Aorta (tissue), 5 donors: ENCODE measurements at regions of chr12 and their contacts with region 1.

Region 1: DNA sequence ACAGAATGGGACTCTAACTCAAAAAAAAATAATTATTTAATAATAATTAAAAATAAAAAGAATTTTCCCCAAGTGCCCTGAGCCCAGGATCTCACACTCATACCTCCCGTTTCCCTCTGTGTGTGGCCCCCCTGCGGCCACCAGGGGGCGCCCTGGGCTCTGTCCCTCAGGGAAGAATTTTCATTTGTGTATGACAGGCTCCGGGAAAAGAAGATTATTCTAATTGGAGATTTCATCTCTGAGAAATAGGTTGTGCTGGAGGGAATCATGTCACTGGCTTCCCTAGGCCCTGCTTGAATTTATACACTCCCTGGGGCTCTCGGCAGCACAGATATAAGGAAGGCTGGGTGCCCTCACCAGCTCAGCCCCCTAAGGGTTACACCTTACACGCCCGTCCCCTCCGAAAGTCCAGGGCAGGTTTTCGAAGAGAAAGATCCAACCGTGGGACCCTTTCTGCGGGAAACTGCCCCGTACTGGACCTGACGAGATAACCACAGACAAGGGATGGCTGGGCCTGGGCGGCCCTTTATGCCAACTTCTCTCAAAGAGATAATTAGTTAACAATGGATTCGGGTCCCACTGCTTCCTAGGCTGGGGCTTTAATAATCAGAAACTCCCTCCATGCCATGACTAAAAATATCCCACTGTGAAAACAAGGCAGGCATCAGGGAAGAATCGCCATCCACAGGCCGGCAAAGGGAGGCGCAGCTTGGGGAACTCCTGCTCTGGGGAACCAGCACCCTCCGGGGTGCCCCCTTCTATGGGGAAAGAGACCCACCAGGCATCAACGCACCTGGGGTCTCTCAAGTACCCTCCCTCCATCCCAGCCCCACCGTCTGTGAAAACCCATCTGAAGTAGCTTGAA is 80.7 kb downstream of the KDM2B start:
- DNase-seq: peak; percentile 84 to 94
- ATAC-seq: peak; percentile 90
- H3K4me3 ChIP-seq: peak overlapping the region in 1 of 2 donors; percentile 21
- H3K27ac ChIP-seq: peak overlapping the region in 1 of 2 donors; percentile 58
- H3K4me1 ChIP-seq: no peaks in the 10 kb centered on the region
- H3K27me3 ChIP-seq: no peaks in the 10 kb centered on the region

Region 2: GRCh38 chr12:121376754-121377697 is 123.1 kb before region 1 on chr12:
- intact Hi-C with region 1: no loop called
- DNase-seq: no peak
- ATAC-seq: no peak
- H3K4me3 ChIP-seq: no peak overlapping the region
- H3K27ac ChIP-seq: no peak overlapping the region
- H3K4me1 ChIP-seq: no peaks in the 10 kb centered on the region
- H3K27me3 ChIP-seq: no peaks in the 10 kb centered on the region

Region 3: GRCh38 chr12:121467115-121467793 is 32.9 kb before region 1 on chr12:
- intact Hi-C with region 1: no loop called
- DNase-seq: peak; percentile 95 to 97
- ATAC-seq: peak; percentile 94
- H3K4me3 ChIP-seq: peak overlapping the region; percentile 77 to 84
- H3K27ac ChIP-seq: peak overlapping the region; percentile 23 to 58
- H3K4me1 ChIP-seq: no peaks in the 10 kb centered on the region
- H3K27me3 ChIP-seq: no peaks in the 10 kb centered on the region

Region 4: GRCh38 chr12:121560392-121561008 is 60.3 kb after region 1 on chr12:
- intact Hi-C with region 1: no loop called
- DNase-seq: peak in 1 of 2 donors; percentile 56
- ATAC-seq: no peak
- H3K4me3 ChIP-seq: no peak overlapping the region
- H3K27ac ChIP-seq: no peak overlapping the region
- H3K4me1 ChIP-seq: no peaks in the 10 kb centered on the region
- H3K27me3 ChIP-seq: no peaks in the 10 kb centered on the region

Region 5: GRCh38 chr12:121579981-121580868 is 80.1 kb after region 1 on chr12:
- intact Hi-C with region 1: loop called in 1 of 2 experiments (anchors 5 kb)
- DNase-seq: peak; percentile 87 to 90
- ATAC-seq: peak; percentile 69
- H3K4me3 ChIP-seq: peak overlapping the region; percentile 89 to 95
- H3K27ac ChIP-seq: peak overlapping the region in 1 of 2 donors; percentile 80
- H3K4me1 ChIP-seq: peaks cover 0 to 6% of the 10 kb centered on the region in 2 donors
- H3K27me3 ChIP-seq: no peaks in the 10 kb centered on the region

Region 6: DNA sequence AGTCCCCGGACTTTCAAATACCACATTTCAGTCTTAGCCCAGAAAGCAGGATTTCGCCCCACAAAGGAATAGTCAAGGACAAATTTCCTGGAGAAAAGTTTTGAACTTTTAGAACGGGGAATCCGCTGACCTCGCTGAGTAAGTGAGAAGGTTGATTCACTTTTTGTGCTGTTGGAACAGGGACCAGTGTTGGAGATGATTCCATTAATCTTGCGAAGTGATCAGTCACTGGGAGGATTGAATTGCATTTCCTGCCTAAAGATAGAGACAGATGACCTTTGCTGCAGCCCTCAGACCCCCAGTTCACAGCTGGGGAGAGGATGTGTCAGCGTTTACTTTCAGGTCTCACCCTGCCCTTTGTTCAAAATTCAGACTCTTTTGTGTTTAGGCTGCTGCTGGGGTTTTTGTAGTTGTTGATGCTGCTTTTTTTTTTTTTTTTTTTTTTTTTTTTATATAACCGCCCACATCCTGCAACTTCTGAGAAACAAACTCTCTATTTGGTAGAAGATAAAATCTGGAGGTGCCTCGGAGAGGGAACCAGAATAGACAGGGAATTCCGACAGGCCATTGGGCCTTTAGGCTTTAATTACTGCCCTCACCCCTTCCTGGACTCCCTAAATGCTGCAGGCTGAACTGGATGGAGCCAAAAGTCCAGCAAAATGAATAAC is 90.4 kb after region 1 on chr12:
- intact Hi-C with region 1: no loop called
- DNase-seq: no peak
- ATAC-seq: peak; percentile 56
- H3K4me3 ChIP-seq: no peak overlapping the region
- H3K27ac ChIP-seq: peak overlapping the region in 1 of 2 donors; percentile 32
- H3K4me1 ChIP-seq: no peaks in the 10 kb centered on the region
- H3K27me3 ChIP-seq: no peaks in the 10 kb centered on the region

Region 7: DNA sequence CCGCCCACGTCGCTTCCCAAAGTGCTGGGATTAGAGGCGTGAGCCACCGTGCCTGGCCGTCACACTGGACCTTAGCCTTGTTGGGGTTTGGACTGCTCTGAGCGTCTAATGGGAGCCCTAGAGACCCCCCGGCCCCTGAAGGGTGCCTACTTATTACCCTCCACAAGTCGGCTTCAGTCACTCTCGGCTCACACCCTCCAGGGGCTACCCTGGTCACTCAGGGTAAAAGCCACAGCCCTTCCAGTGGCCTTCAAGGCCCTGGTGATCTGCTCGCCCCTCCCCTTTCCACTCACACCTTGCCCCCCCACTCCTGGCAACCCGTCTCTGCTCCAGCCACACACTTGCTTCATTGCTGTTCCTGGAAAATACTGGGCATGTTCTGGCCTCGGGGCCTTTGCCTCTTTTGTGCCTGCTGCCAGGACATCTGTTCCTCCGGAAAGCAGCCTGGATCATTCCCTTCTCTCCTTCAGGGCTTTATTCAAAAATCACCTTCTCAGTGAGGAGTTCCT is 172.9 kb after region 1 on chr12:
- intact Hi-C with region 1: loop called (anchors 5 to 10 kb)
- DNase-seq: no peak
- ATAC-seq: peak; percentile 58
- H3K4me3 ChIP-seq: no peak overlapping the region
- H3K27ac ChIP-seq: no peak overlapping the region
- H3K4me1 ChIP-seq: no peaks in the 10 kb centered on the region
- H3K27me3 ChIP-seq: no peaks in the 10 kb centered on the region